GM10248 (cell line): ENCODE measurements at regions of chr17 and their contacts with region 1.

Region 1: DNA sequence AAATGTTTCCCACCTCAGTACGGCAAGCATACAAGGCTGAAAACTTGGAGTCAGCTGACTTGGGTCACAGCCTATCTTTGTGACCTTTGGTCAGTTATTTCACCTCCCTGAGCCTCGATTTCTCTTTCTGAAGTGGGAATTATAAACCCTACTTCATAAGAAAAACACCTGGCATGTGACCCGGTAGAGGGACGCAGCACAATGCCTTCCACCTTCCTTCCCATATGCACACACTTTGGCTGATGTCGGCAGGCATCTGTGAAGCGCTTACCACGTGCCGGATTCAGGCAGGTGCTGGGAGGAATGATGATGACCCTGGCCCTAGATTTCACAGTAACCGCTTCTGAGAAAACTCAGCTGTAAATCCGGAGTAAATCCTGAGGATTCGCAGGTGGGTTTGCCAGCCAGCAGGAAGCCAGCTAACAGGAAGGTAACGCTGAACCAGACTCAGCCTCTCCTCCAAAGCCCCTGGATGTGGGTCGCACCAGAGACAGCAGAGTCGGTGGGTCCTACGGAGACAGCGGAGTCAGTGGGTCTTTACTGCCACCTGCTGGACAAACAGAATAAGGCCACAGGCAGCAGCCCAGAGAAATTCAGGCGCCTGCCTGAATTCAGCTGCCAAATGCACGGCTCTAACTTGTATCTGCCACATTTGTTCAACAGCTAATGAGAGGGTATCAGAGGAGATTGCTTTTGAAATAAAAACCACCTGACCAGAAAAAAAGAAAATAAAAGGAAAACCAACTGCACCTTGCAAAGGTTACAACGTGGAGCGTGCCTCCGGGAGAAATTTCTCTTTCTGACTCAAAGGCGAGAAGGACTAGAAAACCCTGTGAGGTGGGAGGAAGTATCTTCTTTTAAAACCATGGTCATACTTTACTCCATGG is 16.6 kb downstream of the COPRS start:
- DNase-seq: peak; percentile 81
- CTCF ChIP-seq: peak; percentile 88

Region 2: DNA sequence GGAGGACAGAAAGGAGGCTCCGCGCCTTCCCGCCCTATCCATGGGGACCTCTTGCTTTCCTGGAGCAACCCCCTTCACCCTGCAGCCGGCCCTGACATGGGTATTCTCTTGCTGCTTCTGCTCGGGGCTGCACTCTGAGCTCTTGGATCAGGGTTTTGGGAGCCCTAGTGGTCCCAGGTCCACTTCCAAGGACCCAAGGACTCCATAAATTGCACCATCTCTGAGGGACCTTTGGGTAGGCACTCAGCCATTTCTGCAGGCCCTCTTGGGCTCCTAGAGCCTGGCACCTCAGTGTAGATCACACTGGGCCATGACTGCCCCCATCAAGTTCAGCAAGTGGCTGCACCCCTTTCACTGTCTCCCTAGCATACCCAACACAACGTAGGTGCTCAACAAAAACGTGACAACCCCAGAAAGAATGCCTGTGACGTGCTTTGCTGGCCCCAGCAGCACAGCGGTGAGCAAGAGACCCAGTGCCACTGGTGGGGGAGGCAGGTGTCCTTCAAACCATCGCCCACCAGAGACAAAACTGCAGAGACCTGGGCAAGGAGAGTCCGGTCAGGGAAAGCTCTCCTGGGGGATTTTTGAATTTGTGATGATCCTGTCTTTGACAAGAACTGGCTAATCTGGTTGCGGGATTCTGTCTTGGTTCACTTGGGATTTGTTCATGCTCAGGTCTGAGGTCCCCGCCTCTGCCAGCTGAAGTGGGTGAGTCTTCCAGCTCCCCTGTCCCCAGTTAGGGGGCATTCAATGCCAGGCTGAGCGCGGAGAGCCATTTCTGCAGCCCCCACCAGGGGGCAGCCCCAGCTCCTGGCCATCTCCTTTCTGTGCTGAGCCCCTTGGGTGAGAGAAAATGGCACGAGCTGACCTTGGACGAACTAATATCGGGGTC is 453.4 kb before region 1 on chr17:
- CTCF ChIA-PET with region 1: interaction called, 19 read pairs
- POLR2A ChIA-PET with region 1: no interaction called
- DNase-seq: peak; percentile 66
- CTCF ChIP-seq: peak; percentile 71

Region 3: DNA sequence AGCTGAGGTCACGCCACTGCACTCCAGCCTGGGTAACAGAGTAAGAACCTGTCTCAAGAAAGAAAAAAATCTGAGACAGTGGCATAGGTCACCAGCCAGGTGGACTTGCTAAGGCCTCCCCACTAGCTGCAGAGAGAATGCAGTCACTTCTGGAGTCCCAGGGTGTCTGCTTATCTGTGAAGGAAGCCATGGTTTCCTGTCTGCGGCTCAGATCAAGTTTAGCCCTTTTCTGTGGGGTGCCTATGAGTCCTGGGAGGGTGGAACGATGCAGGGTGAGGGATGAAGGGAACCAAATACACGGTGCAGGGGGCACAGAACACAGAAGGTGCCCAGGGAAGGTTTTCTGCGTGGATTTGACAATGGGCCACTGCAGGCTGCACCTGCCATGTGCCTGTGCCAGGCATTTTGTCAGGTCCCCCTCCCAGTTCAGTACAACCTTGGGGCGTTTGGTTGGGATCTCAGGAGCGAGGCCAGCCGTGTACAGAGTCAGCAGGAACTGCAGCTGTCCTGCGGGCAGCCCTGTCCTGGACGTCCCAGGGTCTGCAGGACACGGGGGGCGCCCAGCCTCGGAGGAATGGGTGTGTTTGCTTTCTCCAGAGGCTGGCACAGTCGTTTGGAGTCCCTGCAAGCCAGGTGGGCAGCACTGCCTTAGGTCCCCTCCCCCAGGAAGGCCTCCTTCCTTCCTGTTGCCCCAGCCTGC is 409.2 kb before region 1 on chr17:
- CTCF ChIA-PET with region 1: interaction called, 16 read pairs
- POLR2A ChIA-PET with region 1: no interaction called
- DNase-seq: no peak
- CTCF ChIP-seq: no peak

Region 4: DNA sequence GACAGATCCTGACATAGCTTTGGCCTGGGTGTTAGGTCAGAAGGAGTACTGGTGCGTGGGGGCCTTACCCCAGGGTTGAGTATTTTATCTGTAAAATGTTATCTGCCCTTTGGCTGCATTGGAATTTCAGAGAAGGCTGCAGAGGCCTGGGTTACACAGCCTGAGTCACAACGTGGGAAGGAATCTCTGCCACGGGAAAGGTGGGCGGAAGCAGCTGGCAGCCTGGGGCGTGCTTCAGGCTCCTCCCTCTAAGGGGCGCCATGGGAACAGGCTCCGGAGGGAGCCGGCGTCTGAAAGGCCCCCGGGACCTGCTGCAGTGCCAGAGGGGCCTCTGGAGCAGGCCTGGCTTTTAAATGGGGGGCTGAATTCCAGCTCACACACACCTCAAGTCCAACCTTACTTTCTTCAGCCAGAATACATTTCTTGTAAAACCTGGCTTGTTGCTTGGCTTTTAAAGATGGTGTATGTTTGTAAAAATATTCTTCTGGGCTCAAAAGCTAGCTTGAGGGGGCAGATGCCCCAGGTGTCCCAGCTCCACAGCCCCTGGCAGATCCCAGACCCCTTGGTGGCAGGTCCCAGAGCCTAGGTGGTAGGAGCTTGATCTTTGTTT is 308.8 kb before region 1 on chr17:
- CTCF ChIA-PET with region 1: interaction called, 33 read pairs
- POLR2A ChIA-PET with region 1: no interaction called
- DNase-seq: no peak
- CTCF ChIP-seq: peak; percentile 50

Region 5: GRCh38 chr17:31541559-31541958 is 300.9 kb before region 1 on chr17:
- CTCF ChIA-PET with region 1: interaction called, 33 read pairs
- POLR2A ChIA-PET with region 1: no interaction called
- DNase-seq: peak; percentile 34
- CTCF ChIP-seq: no peak

Region 6: DNA sequence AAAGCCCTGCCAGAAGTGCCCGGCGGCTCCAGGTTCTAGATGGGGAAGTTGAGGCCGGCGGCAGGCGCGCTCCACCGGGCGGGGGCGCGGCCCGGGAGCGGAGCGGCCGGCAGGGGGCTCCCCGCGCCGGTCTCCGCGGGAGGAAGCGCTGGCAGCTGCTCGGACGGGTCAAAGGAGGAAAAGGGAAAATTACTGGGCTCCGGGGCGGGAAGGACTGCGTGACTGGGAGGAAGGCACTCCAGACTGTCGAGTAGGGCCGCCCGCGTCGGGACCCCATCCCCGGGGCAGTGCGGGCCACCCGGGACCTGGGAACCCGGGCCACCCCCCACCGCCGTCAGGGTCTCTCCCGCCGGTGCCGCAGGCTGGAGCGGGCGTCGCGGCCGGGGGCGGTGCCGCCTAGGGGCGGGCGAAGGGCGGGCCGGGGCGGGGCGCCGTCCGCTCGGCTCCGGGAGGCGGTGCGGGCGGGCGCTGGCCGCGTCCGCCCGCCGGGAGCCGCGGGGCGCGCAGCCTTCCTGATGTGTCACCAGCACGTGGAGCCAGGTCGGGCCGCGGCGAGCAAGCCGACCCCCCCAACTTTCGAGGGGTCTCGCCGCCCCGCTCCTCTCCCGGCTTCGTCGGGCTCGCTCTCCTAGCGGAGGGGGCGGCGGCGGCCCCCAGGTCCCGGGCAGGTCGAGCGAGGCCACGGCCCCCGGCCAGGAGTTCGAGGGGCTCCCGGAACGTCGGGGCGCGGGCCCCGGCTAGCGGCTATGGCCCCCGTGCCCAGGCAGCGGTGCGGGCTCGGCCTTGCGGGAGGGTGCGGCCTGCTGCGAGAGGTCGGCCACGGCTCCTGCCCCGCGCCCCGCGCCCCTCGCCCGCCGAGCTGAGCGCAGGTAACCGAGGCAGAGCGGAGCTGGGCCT is 283.4 kb before region 1 on chr17:
- CTCF ChIA-PET with region 1: interaction called, 50 read pairs
- POLR2A ChIA-PET with region 1: interaction called, 7 read pairs
- DNase-seq: peak; percentile 84
- CTCF ChIP-seq: peak; percentile 67

Region 7: DNA sequence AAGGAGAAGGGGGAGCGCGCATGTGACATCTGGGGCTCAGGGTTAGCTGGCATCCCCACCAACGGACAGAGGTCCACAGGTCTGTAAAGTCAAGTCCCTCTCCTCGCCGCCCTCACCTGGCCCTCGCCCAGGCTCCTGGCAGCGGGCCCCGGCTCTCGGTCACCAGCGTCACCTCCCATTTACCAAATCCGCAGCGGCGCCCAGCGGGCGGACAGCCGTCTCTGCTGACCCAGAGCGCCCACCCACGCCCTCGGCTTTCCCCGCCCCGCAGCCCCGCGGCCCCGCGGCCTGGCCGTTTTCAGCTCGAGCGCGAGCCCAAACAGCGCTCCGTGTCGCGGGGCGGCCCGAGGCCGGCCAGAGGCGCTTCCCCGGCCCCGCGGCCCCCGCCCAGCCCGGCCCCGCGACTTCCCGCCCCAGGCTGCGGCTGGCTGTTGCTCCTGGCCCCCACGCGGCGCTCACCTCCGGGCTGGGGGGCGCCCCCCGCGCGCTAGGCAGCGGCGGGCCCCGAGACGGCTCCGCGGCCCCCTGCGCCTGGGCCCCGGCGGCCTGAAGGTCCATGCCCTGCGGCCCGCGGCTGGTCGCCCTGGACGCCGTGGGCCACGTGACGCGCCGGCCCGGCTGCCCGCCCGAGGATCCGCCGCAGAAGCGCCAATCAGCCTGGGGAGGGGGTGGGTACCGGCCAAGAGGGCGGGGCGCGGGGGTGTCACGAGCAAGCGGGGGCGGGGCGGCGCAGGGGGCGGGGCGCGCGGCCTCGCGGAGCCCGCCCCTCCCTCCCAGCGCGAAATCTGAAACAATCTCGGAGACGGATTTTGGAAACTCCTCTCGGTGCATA is 16.4 kb after region 1 on chr17 and contains the start of gene COPRS:
- CTCF ChIA-PET with region 1: interaction called, 46 read pairs
- POLR2A ChIA-PET with region 1: interaction called, 14 read pairs
- DNase-seq: peak; percentile 96
- CTCF ChIP-seq: peak; percentile 26